ENCODE measurements at regions of chr11 and their contacts with region 1.

Region 1: GRCh38 chr11:76524919-76525318 is 80.1 kb downstream of the EMSY start:
- DNase-seq: peak in 1 of 3 donors; percentile 52
- ATAC-seq: peak; percentile 85 to 94
- H3K4me3 ChIP-seq: no peak overlapping the region
- H3K27ac ChIP-seq: no peak overlapping the region
- H3K4me1 ChIP-seq: no peaks in the 10 kb centered on the region
- H3K27me3 ChIP-seq: no peaks in the 10 kb centered on the region

Region 2: DNA sequence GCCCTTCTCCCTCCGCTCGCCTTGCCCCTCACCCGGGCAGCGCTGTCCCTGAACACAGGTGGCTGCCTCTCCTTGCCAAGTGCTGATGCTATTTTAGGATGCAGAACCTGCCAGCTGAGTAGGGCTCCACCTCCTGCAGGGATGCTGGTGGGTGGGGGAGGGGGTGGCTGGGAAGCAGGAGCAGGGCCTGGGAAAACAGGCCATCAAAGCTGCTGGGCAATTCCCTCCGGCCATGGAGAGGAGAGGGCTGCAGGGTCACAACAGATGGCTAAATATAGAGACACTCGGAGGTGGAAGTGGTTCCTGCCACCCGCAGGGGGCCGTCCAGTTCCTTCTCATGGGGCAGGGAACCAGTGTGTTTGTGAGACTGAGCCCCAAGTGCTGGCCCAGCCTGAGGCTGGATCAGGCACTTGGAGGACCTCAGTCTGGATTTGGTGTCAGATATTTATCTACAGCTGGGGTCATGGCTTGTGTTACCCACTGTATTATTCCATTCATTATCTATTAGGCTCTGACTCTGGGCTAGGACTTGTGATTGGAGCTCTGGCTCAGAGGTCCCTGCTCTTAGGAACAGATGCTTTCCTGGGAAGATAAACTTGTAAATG is 86.1 kb after region 1 on chr11:
- intact Hi-C with region 1: no loop called
- DNase-seq: peak in 2 of 3 donors; percentile 57 to 78
- ATAC-seq: peak in 1 of 2 donors; percentile 7
- H3K4me3 ChIP-seq: no peak overlapping the region
- H3K27ac ChIP-seq: peak overlapping the region; percentile 3
- H3K4me1 ChIP-seq: peaks cover 23% of the 10 kb centered on the region
- H3K27me3 ChIP-seq: no peaks in the 10 kb centered on the region

Region 3: DNA sequence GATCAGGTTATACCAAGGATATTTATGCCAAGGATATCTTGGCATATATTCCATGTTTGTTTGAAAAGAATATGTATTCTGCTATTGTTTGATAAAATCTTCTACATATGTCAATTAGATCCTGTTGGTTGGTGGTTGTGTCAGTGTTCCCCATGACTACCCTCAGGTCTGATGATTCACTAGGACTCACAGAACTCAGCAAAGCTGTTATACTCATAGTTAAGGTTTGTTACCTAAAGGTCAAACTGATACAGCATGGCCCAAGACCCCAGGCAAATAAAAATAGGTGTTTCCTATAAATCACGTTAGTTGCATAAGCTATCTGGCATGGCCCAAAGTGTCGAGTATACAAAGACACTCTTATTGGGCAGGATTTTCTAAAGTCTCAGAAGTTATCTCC is 479.0 kb after region 1 on chr11:
- intact Hi-C with region 1: loop called in 1 of 4 experiments (anchors 10 kb)
- DNase-seq: no peak
- ATAC-seq: no peak
- H3K4me3 ChIP-seq: no peak overlapping the region
- H3K27ac ChIP-seq: no peak overlapping the region
- H3K4me1 ChIP-seq: no peaks in the 10 kb centered on the region
- H3K27me3 ChIP-seq: no peaks in the 10 kb centered on the region